ENCODE measurements at regions of chr15 and their contacts with region 1.

Region 1: DNA sequence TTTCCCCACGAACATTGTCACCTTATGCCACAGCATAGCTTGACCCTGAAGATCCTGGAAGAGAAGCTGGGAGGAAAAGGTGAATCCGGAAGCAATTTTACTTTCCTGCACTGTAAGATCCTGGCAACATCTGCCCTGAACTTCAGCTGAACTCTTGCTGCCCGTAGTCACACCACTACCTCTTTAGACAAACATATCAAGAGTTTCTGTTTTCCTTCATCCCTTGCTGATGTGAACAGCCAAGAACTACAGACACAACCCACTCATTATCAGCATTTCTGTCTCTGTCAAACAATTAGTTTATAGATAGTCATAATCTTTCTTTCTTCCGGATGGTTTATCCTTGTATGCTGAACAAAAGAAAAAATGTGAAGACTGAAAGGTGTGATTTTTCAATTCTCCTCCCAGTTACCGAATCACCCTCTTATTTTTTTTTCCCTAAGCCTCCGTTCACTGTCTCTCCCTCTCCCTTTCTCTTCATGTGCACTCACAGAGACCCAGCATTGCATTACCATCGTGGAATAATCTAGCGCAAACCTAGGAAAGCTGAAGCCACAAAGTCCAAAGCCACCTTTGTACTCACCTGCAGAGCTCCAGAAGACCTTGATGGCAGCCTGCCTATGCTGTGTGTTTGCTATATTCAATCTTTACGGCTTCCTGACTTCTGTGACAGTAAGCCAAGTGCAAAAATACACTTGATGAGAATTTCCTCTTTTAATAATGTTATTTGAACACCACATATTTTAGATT is 229.2 kb downstream of the CDIN1 start:
- DNase-seq: peak; percentile 75
- H3K4me3 ChIP-seq: no peak overlapping the region
- H3K27ac ChIP-seq: no peak overlapping the region
- H3K4me1 ChIP-seq: peaks cover 24% of the 10 kb centered on the region
- H3K27me3 ChIP-seq: no peaks in the 10 kb centered on the region
- CTCF ChIP-seq: no peak
- POLR2A ChIP-seq: no peak

Region 2: GRCh38 chr15:36734366-36734765 is 74.2 kb before region 1 on chr15:
- CTCF ChIA-PET with region 1: no interaction called
- POLR2A ChIA-PET with region 1: no interaction called
- dilution Hi-C with region 1: no loop called
- intact Hi-C with region 1: loop called (anchors 5 kb)
- DNase-seq: no peak
- H3K4me3 ChIP-seq: no peak overlapping the region
- H3K27ac ChIP-seq: no peak overlapping the region
- H3K4me1 ChIP-seq: peaks cover 5% of the 10 kb centered on the region
- H3K27me3 ChIP-seq: no peaks in the 10 kb centered on the region
- CTCF ChIP-seq: no peak
- POLR2A ChIP-seq: no peak

Region 3: GRCh38 chr15:36777926-36778325 is 30.7 kb before region 1 on chr15:
- CTCF ChIA-PET with region 1: no interaction called
- POLR2A ChIA-PET with region 1: no interaction called
- dilution Hi-C with region 1: no loop called
- intact Hi-C with region 1: no loop called
- DNase-seq: no peak
- H3K4me3 ChIP-seq: no peak overlapping the region
- H3K27ac ChIP-seq: no peak overlapping the region
- H3K4me1 ChIP-seq: peaks cover 5% of the 10 kb centered on the region
- H3K27me3 ChIP-seq: no peaks in the 10 kb centered on the region
- CTCF ChIP-seq: no peak
- POLR2A ChIP-seq: no peak

Region 4: DNA sequence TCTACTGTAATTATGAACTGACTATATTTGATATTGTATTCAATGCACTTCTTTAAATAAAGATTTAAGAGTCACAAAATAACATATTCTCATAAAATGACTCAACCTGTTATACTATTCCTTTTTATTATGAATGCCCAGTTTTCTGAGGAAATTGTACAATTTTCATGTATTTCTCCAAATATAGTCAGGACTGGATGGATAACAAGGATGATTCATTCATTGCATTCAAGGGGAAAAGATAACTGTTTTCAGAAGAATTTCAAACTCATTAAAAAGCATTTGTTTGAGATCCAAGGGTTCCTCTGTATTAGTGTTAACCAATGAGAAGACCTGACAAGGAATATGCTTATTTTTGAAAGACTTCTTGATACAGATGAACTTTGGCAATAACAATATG is 128.0 kb after region 1 on chr15:
- CTCF ChIA-PET with region 1: no interaction called
- POLR2A ChIA-PET with region 1: no interaction called
- dilution Hi-C with region 1: no loop called
- intact Hi-C with region 1: no loop called
- DNase-seq: no peak
- H3K4me3 ChIP-seq: no peak overlapping the region
- H3K27ac ChIP-seq: no peak overlapping the region
- H3K4me1 ChIP-seq: no peaks in the 10 kb centered on the region
- H3K27me3 ChIP-seq: no peaks in the 10 kb centered on the region
- CTCF ChIP-seq: no peak
- POLR2A ChIP-seq: no peak

Region 5: GRCh38 chr15:37253877-37254276 is 445.3 kb after region 1 on chr15:
- CTCF ChIA-PET with region 1: no interaction called
- POLR2A ChIA-PET with region 1: no interaction called
- dilution Hi-C with region 1: no loop called
- intact Hi-C with region 1: no loop called
- DNase-seq: no peak
- H3K4me3 ChIP-seq: no peak overlapping the region
- H3K27ac ChIP-seq: no peak overlapping the region
- H3K4me1 ChIP-seq: no peaks in the 10 kb centered on the region
- H3K27me3 ChIP-seq: no peaks in the 10 kb centered on the region
- CTCF ChIP-seq: no peak
- POLR2A ChIP-seq: no peak